SK-N-SH (cell line): ENCODE measurements at regions of chr3 and their contacts with region 1.

Region 1: DNA sequence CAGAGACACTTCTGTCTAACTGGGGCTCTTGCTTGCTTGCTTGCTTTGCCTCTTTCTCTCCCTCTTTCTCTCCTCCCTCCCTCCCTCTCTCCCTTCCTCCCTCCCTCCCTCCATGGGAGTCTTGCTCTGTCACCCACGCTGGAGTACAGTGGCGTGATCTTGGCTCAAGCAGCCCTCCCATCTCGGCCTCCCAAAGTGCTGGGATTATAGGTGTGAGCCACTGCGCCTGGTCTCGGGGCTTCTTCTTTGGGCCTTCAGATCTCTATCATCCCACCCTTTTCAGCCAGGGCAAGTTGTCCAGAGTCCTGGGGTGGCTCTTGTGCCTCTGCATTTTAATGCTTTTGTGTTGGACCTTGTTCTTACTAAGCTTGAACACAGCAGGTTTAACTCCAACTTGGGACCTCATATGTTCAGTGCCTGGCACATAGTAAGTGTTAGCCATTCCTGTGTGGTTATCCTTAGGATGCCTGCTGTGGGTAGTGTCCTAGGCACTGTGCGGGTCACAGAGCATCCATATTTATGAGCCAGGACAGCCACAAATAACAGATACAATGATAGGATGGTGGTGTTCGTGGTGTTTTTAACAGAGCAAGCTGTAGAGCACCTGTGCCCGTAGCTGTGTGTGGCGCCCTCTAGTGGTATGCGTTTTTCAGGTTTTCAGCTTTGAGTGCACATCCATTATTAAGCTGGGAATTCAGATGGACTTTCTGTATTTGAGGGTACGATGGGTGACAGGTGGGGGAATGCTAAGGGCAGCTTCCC is 75.1 kb downstream of the CCK start:
- DNase-seq: peak; percentile 67
- H3K4me3 ChIP-seq: peak overlapping the region in 1 of 2 experiments; percentile 26; a peak in 1 of 4 replicates
- H3K27ac ChIP-seq: no peak overlapping the region; a peak in 1 of 4 replicates
- H3K4me1 ChIP-seq: peaks cover 0 to 2% of the 10 kb centered on the region in 2 experiments; a peak in 1 of 4 replicates
- H3K27me3 ChIP-seq: no peaks in the 10 kb centered on the region
- CTCF ChIP-seq: peak; percentile 91
- EP300 ChIP-seq: no peak
- RAD21 ChIP-seq: peak; percentile 78

Region 2: GRCh38 chr3:42118762-42119361 is 72.0 kb before region 1 on chr3:
- CTCF ChIA-PET with region 1: interaction called, 261 read pairs
- POLR2A ChIA-PET with region 1: interaction called, 4 read pairs
- DNase-seq: peak; percentile 80
- H3K4me3 ChIP-seq: no peak overlapping the region
- H3K27ac ChIP-seq: no peak overlapping the region
- H3K4me1 ChIP-seq: peaks cover 2 to 8% of the 10 kb centered on the region in 2 experiments; a peak in 3 of 4 replicates
- H3K27me3 ChIP-seq: no peaks in the 10 kb centered on the region
- CTCF ChIP-seq: peak; percentile 47
- EP300 ChIP-seq: no peak
- RAD21 ChIP-seq: peak; percentile 87

Region 3: DNA sequence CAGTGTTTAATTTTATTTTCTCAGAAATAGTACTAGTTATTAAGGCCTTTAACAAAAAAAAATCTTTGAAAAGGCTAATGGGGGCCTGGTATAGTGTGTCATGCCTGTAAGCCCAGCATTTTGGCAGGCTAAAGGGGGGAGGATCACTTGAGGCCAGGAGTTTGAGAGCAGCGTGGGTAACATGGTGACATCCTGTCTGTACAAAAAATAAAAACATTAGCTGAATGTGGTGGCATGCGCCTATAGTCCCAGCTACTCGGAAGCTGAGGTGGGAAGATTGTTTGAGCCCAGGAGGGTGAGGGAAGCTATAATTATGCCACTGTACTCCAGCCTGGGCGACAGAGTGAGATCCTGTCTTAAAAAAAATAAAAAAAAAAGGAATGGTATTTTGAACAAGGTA is 37.8 kb before region 1 on chr3:
- CTCF ChIA-PET with region 1: interaction called, 12 read pairs
- POLR2A ChIA-PET with region 1: no interaction called
- DNase-seq: no peak
- H3K4me3 ChIP-seq: no peak overlapping the region
- H3K27ac ChIP-seq: peak overlapping the region in 1 of 2 experiments; percentile 76; a peak in 2 of 4 replicates
- H3K4me1 ChIP-seq: peaks cover 0 to 37% of the 10 kb centered on the region in 2 experiments; a peak in 2 of 4 replicates
- H3K27me3 ChIP-seq: no peaks in the 10 kb centered on the region
- CTCF ChIP-seq: no peak
- EP300 ChIP-seq: no peak
- RAD21 ChIP-seq: no peak

Region 4: DNA sequence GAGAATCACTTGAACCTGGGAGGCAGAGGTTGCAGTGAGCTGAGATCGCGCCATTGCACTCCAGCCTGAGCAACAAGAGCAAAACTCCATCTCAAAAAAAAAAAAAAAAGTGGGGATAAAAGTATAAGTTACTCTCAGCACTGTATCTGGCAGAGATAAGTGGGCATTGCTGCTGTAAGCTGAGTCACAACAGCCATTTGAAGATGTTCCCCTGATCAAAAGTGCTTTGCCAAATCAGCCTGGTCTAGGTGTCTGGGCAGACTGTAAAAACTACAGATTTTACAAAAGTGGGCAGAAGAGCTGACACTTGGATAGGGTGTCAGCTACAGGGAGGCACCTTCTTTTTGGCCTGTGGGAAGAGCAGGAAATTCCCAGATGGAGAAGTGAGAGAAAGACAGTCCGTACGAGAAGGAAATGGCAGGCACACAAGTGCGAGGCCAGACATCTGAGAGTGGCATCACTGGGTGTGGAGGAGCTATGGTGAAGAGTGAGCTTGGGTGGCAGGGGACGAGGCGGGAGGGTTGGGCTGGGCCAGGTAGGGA is 21.2 kb before region 1 on chr3:
- CTCF ChIA-PET with region 1: interaction called, 70 read pairs
- POLR2A ChIA-PET with region 1: no interaction called
- DNase-seq: no peak
- H3K4me3 ChIP-seq: no peak overlapping the region
- H3K27ac ChIP-seq: no peak overlapping the region
- H3K4me1 ChIP-seq: peaks cover 0 to 30% of the 10 kb centered on the region in 2 experiments; a peak in 2 of 4 replicates
- H3K27me3 ChIP-seq: no peaks in the 10 kb centered on the region
- CTCF ChIP-seq: no peak
- EP300 ChIP-seq: no peak
- RAD21 ChIP-seq: no peak

Region 5: DNA sequence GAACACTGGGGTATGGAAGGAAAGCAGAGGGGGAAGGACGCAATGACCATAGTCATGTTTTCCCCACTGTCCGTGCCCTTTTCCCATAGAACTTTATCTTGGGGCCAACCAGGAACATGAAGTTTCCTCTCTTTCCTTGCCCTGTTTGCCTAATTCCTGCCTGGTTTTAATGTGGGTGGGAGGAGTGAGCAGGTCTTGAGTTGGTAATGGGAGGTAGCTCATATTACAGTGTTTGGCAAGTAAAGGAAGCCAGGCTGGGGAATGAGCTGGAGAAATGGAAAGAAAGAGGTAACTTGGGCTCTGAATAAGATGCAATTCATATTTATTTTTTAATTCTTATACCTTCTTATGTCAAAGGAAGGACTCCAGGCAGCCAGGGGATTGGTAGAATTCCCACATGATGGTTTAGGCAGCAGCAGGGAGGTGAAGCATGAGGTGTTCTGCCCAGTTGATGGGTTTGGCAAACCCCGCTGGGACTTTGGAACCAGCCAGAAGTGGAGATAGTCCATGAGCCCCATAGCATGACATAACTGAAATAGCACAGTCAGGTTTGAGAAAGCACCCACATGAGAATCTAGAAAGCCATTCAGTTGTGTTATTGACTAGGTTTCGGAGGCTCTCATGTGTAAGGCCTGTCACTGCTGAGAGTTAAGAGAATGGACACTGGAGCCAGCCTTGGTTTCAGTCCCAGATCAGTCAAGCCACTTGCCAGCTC is 15.1 kb after region 1 on chr3:
- CTCF ChIA-PET with region 1: interaction called, 23 read pairs
- POLR2A ChIA-PET with region 1: no interaction called
- DNase-seq: no peak
- H3K4me3 ChIP-seq: no peak overlapping the region
- H3K27ac ChIP-seq: no peak overlapping the region
- H3K4me1 ChIP-seq: peaks cover 0 to 6% of the 10 kb centered on the region in 2 experiments; a peak in 1 of 4 replicates
- H3K27me3 ChIP-seq: no peaks in the 10 kb centered on the region
- CTCF ChIP-seq: no peak
- EP300 ChIP-seq: no peak
- RAD21 ChIP-seq: no peak

Region 6: GRCh38 chr3:42314411-42314810 is 123.5 kb after region 1 on chr3:
- CTCF ChIA-PET with region 1: no interaction called
- POLR2A ChIA-PET with region 1: no interaction called
- DNase-seq: no peak
- H3K4me3 ChIP-seq: no peak overlapping the region; a peak in 1 of 4 replicates
- H3K27ac ChIP-seq: no peak overlapping the region
- H3K4me1 ChIP-seq: no peaks in the 10 kb centered on the region
- H3K27me3 ChIP-seq: no peaks in the 10 kb centered on the region
- CTCF ChIP-seq: no peak
- EP300 ChIP-seq: no peak
- RAD21 ChIP-seq: no peak